Sigmoid colon (tissue), 7 donors: ENCODE measurements at regions of chr12 and their contacts with region 1.

Region 1: DNA sequence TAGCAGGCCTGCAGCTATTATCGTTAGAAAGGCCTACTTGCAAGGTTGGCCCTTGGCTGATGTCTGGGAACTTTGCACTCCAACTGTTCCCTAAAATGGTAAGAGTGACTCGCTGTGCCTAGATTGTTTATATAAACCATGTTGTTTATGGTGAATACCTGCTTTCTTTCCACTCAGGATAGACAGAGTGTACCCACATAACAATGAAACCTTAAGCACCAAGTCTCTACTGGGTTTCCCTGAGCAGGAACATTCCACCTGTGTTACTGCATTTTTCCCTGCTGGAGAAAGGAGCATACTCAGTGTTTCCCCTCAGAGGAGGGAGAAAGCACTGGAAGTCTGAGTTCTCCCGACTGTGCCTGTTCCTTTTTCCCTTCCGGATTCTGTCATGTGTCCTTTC is 32.8 kb downstream of the ERP29 start:
- DNase-seq: peak; percentile 80
- H3K4me3 ChIP-seq: no peak overlapping the region
- H3K27ac ChIP-seq: peak overlapping the region; percentile 68 to 88 (median 82)
- H3K4me1 ChIP-seq: peaks cover 0 to 65% (median 24%) of the 10 kb centered on the region in 4 donors
- H3K27me3 ChIP-seq: no peaks in the 10 kb centered on the region
- CTCF ChIP-seq: no peak
- EP300 ChIP-seq: peak; percentile 72 to 97 (median 86)
- POLR2A ChIP-seq: no peak

Region 2: DNA sequence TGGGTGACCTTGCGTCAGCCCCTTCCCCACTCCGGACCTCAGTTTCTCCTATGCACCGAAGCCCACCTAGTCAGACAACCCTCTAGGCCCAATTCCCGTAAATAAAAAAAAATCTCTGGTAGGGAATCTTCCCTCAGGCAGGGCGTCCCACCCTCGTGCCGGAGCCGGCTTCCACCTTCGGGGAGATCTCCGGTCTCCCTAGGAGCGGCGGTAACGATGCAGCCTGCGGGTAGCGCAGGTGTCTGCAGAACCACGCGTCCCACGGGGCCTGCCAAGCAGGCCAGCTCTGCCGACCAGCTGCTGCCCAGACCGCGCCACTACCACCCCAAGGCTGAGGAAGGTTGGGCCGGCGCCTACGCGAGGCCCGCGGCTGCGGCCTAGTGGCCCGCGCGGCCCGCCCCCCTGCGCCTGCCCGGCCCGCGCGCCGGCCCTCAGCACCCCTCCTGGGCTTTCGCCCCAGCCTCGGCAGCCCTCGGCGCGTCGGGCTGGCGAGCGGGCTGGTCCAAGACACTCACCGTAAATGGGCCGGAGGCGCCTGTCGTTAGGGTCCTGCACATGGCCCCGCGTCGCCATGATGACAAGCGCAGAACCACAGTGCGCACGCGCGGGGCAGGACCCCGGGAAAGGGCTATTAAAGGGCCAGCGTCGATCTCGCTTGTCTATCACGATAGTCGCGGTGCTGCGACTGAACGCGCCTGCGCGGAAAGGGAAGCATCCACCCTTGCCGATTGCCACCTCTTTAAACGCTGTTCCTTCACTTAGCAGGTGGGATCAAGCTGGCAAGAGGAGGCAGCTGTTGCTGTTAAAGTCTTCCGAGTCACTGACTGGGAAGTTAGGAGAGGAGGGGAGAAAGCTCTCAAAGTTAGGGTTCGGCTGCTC is 62.4 kb after region 1 on chr12 and contains the start of gene NAA25:
- intact Hi-C with region 1: loop called (anchors 5 kb)
- DNase-seq: peak; percentile 96
- H3K4me3 ChIP-seq: peak within 1 kb of the TSS; percentile 76 to 85 (median 80)
- H3K27ac ChIP-seq: peak within 1 kb of the TSS; percentile 95 to 99 (median 97)
- H3K4me1 ChIP-seq: peaks cover 0 to 49% (median 33%) of the 10 kb centered on the region in 4 donors
- H3K27me3 ChIP-seq: no peaks in the 10 kb centered on the region
- CTCF ChIP-seq: no peak
- EP300 ChIP-seq: no peak
- POLR2A ChIP-seq: peak in 1 of 2 donors; percentile 43
- total RNA-seq, gene NAA25: 21.6 to 26.6 (median 22.5) TPM